ENCODE measurements at regions of chr3 and their contacts with region 1.

Region 1: GRCh38 chr3:57692259-57693147 is at the start of gene DENND6A:
- DNase-seq: peak; percentile 80
- ATAC-seq: peak; percentile 86
- H3K4me3 Mint-ChIP-seq: peak within 1 kb of the TSS; percentile 88
- H3K27ac Mint-ChIP-seq: peak within 1 kb of the TSS; percentile 90
- H3K4me1 Mint-ChIP-seq: peaks cover 33% of the 10 kb centered on the region
- H3K27me3 Mint-ChIP-seq: no peaks in the 10 kb centered on the region
- CTCF ChIP-seq: no peak
- total RNA-seq, gene DENND6A: 10.1 to 13.1 TPM

Region 2: DNA sequence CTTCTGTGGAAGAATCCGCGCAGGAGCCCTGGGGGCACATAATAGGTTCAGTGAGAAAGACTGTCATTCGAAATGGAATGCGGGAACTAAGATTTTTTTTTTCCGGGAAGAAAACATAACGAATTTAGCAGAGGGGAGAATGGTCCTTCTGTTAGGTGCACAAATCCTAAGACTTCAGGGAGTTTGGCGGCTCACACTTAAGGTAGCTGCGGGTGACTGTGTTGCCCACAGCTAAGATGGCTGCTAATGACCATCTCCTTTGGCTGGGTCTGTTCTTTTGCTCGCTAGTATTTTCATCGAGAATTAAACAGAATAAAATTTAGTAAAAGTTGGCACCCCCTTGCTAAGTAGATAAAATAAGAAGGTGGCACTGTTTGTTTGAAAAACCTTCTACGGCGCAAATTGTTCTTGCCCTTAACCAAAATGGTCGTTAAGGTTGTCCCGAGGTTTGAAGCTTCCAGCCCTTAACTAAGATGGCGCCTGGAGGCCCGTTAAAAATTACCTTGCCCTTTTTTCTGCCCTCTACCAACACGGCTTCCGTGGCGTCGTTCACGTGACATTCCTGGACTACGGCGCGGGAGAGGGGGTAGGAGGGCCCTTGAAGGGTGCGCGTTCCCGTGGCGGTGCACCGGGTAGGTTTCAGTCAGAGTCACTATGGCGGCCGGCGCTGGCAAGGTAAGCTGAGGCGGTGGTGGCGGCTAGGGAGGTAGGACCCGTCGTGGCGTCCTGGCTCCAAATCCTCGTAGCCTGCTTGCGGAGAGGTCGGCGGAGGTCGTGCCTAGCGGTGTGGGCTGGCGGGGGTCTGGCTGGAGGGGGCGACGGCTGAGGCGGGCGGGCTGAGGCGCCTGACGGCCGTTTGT is 63.4 kb after region 1 on chr3 and contains the start of gene SLMAP:
- CTCF ChIA-PET with region 1: interaction called, 4 read pairs
- POLR2A ChIA-PET with region 1: interaction called, 11 read pairs
- intact Hi-C with region 1: no loop called
- DNase-seq: peak; percentile 98
- ATAC-seq: peak; percentile 94
- H3K4me3 Mint-ChIP-seq: peak within 1 kb of the TSS; percentile 96
- H3K27ac Mint-ChIP-seq: peak within 1 kb of the TSS; percentile 96
- H3K4me1 Mint-ChIP-seq: peaks cover 35% of the 10 kb centered on the region
- H3K27me3 Mint-ChIP-seq: no peaks in the 10 kb centered on the region
- CTCF ChIP-seq: no peak
- total RNA-seq, gene SLMAP: 45.8 to 47.3 TPM

Region 3: GRCh38 chr3:57927916-57928315 is 235.4 kb after region 1 on chr3:
- CTCF ChIA-PET with region 1: no interaction called
- POLR2A ChIA-PET with region 1: no interaction called
- intact Hi-C with region 1: no loop called
- DNase-seq: no peak
- ATAC-seq: no peak
- H3K4me3 Mint-ChIP-seq: no peak overlapping the region
- H3K27ac Mint-ChIP-seq: no peak overlapping the region
- H3K4me1 Mint-ChIP-seq: no peaks in the 10 kb centered on the region
- H3K27me3 Mint-ChIP-seq: no peaks in the 10 kb centered on the region
- CTCF ChIP-seq: no peak

Measured in activated CD8-positive, alpha-beta T cell treated with anti-CD3 and anti-CD28 coated beads for 36 hours (primary cell).